Common myeloid progenitor, CD34-positive (primary cell): ENCODE measurements at regions of chr6 and their contacts with region 1.

Region 1: DNA sequence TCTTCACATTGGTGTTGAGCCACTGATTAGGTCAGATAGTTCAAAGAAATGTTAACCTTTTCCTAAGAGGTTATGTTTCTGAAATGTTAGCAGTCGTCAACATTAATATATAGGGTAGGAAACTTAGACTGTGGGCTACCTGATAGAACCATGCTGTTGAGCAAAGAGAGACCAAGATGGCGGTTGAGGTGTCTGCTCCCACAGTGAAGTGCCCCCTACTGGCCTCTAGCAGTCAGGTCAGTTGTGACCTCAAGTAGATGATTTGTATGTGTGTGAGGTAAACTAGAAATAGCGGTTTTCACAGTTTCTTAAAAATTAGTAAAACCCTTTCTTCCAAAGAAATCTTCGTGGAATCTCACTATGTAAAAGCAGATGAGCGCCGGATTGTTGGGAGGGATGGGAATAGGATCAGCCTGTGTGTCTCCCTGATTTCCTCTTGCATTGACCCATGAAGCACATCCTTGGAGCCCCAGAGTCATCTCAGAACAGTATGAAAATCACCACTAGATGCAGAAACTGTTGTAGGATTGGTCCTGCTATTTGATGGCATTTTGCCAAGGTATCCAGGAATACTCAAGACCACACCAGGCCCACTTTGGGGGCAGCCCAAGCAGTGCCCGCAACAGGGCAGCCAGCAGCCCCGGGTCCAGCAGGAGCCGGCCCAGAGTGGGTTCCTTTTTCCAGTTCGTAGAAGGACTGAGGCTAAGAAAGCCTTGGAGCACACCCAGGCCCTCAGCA is 40.4 kb downstream of the MTHFD1L start:
- DNase-seq: no peak
- H3K4me3 ChIP-seq: no peak overlapping the region
- H3K27ac ChIP-seq: no peak overlapping the region
- H3K4me1 ChIP-seq: no peaks in the 10 kb centered on the region
- H3K27me3 ChIP-seq: no peaks in the 10 kb centered on the region

Region 2: DNA sequence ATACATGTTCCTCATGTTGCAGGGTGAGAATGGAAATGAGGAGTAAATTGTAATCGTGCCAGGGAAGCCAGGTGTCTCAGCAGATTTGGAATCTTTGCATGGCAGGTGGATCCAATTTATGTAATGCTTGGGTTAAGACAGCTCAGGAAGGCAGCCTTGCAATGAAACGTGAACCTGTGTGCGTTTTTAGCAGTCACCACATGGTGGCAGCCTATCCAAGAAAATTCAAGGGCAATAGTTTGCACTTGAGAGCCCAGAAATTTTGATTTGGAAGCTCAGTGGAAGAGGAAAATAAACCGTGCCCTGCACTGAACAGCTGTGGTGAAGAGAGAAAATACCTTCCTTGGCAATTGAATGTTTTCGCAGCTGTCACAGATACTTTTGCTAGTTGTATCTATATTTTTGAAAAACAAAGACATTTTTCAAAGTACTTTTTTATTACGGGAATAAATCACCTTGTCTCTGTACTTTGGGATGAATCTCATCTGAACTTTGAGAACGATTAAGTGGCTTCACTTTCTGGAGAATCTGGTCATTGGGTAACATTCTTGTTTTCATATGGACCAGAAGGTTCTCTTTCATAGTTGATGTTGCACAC is 14.0 kb before region 1 on chr6:
- CTCF ChIA-PET with region 1: interaction called, 14 read pairs
- POLR2A ChIA-PET with region 1: no interaction called
- DNase-seq: peak; percentile 57 to 83 (median 73)
- H3K4me3 ChIP-seq: no peak overlapping the region
- H3K27ac ChIP-seq: no peak overlapping the region
- H3K4me1 ChIP-seq: peaks cover 0 to 3% (median 0%) of the 10 kb centered on the region in 4 experiments
- H3K27me3 ChIP-seq: no peaks in the 10 kb centered on the region

Region 3: DNA sequence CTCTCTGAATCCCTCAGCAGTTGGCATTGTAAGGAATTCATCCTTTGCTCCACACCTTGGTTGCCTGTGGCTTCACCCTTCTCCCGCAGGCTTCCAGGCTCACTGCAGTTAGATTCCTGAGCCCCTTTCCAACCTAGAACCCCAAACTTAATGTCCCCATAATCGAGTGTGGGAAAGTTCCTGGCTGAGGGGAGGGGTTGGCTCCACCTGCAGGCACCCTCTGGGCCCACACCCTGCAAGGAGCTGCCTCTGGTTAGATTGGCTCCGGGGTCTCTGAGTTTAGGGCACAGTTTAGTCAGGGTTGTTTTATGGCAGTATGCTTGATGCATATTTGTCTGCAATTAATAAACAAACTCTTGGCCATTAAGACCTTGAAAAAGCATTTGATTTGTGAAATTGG is 22.9 kb after region 1 on chr6:
- CTCF ChIA-PET with region 1: no interaction called
- POLR2A ChIA-PET with region 1: no interaction called
- DNase-seq: peak in 1 of 3 donors; percentile 2
- H3K4me3 ChIP-seq: no peak overlapping the region
- H3K27ac ChIP-seq: no peak overlapping the region
- H3K4me1 ChIP-seq: no peaks in the 10 kb centered on the region
- H3K27me3 ChIP-seq: no peaks in the 10 kb centered on the region